GM12878 (cell line): ENCODE measurements at regions of chr3 and their contacts with region 1.

Region 1: GRCh38 chr3:56801662-56802377 is at the start of gene ARHGEF3:
- DNase-seq: no peak
- ATAC-seq: peak; percentile 91
- H3K4me3 ChIP-seq: peak within 1 kb of the TSS; percentile 71
- H3K27ac ChIP-seq: peak within 1 kb of the TSS; percentile 54
- H3K4me1 ChIP-seq: peaks cover 6% of the 10 kb centered on the region
- H3K27me3 ChIP-seq: no peaks in the 10 kb centered on the region
- CTCF ChIP-seq: peak; percentile 70 to 81 (median 75)
- EP300 ChIP-seq: no peak
- POLR2A ChIP-seq: peak; percentile 77
- RAD21 ChIP-seq: peak; percentile 67
- polyA plus RNA-seq, gene ARHGEF3: 21.8 to 31.1 TPM

Region 2: GRCh38 chr3:56291953-56292352 is 509.9 kb before region 1 on chr3:
- CTCF ChIA-PET with region 1: no interaction called
- POLR2A ChIA-PET with region 1: no interaction called
- RAD21 ChIA-PET with region 1: no interaction called
- SMC1A ChIA-PET with region 1: no interaction called
- in situ Hi-C with region 1: no loop called
- intact Hi-C with region 1: no loop called
- DNase-seq: no peak
- ATAC-seq: no peak; the same call in 2 of the 3 replicates
- H3K4me3 ChIP-seq: no peak overlapping the region
- H3K27ac ChIP-seq: no peak overlapping the region
- H3K4me1 ChIP-seq: peaks cover 13% of the 10 kb centered on the region
- H3K27me3 ChIP-seq: no peaks in the 10 kb centered on the region
- CTCF ChIP-seq: no peak
- EP300 ChIP-seq: no peak
- POLR2A ChIP-seq: no peak
- RAD21 ChIP-seq: no peak

Region 3: GRCh38 chr3:56556908-56557830 is 244.7 kb before region 1 on chr3 and contains the start of gene CCDC66:
- CTCF ChIA-PET with region 1: interaction called, 6 read pairs
- POLR2A ChIA-PET with region 1: no interaction called
- RAD21 ChIA-PET with region 1: interaction called, 4 read pairs
- SMC1A ChIA-PET with region 1: interaction called, 18 read pairs
- in situ Hi-C with region 1: no loop called
- intact Hi-C with region 1: no loop called
- DNase-seq: peak; percentile 82
- ATAC-seq: peak; percentile 99
- H3K4me3 ChIP-seq: peak within 1 kb of the TSS; percentile 80
- H3K27ac ChIP-seq: peak within 1 kb of the TSS; percentile 73
- H3K4me1 ChIP-seq: no peaks in the 10 kb centered on the region
- H3K27me3 ChIP-seq: no peaks in the 10 kb centered on the region
- CTCF ChIP-seq: peak; percentile 74 to 86 (median 84)
- EP300 ChIP-seq: no peak
- POLR2A ChIP-seq: peak; percentile 99
- RAD21 ChIP-seq: peak; percentile 35; the same call in 1 of the 2 replicates
- polyA plus RNA-seq, gene CCDC66: 9.4 to 13.9 TPM

Region 4: DNA sequence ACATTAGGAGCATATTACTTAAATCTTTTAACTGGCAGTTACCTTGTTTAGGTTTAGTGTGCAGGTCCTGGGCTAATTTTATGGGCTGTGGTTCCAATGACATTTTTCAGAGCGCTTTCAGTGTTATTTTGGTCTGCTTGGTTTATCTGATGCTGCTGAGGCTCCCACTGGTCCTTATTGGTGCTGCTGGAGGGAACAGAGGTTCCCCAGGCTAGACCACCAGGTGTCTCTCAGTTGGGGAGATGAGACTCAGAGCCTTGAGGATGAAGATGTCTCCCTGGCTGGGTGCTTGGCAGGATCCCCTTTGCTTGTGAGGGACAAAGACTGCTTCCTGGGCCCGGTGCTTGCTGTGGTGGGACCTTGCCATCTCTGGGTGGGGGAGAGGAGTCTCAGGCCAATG is 90.5 kb before region 1 on chr3:
- CTCF ChIA-PET with region 1: interaction called, 429 read pairs
- POLR2A ChIA-PET with region 1: interaction called, 74 read pairs
- RAD21 ChIA-PET with region 1: interaction called, 388 read pairs
- SMC1A ChIA-PET with region 1: interaction called, 411 read pairs
- in situ Hi-C with region 1: loop called (anchors 5 kb)
- intact Hi-C with region 1: no loop called
- DNase-seq: no peak
- ATAC-seq: peak; percentile 66
- H3K4me3 ChIP-seq: no peak overlapping the region
- H3K27ac ChIP-seq: no peak overlapping the region
- H3K4me1 ChIP-seq: no peaks in the 10 kb centered on the region
- H3K27me3 ChIP-seq: no peaks in the 10 kb centered on the region
- CTCF ChIP-seq: peak in 2 of 3 experiments; percentile 7 to 20; a peak in 2 of 6 replicates
- EP300 ChIP-seq: no peak
- POLR2A ChIP-seq: no peak
- RAD21 ChIP-seq: peak; percentile 18; the same call in 1 of the 2 replicates

Region 5: GRCh38 chr3:56758539-56758981 is 43.3 kb before region 1 on chr3:
- CTCF ChIA-PET with region 1: interaction called, 244 read pairs
- POLR2A ChIA-PET with region 1: interaction called, 86 read pairs
- RAD21 ChIA-PET with region 1: interaction called, 307 read pairs
- SMC1A ChIA-PET with region 1: interaction called, 383 read pairs
- in situ Hi-C with region 1: no loop called
- intact Hi-C with region 1: loop called (anchors 2 kb)
- DNase-seq: peak; percentile 87
- ATAC-seq: peak; percentile 88
- H3K4me3 ChIP-seq: peak overlapping the region; percentile 49; the same call in 1 of the 2 replicates
- H3K27ac ChIP-seq: peak overlapping the region; percentile 62
- H3K4me1 ChIP-seq: peaks cover 42% of the 10 kb centered on the region
- H3K27me3 ChIP-seq: no peaks in the 10 kb centered on the region
- CTCF ChIP-seq: no peak
- EP300 ChIP-seq: peak; percentile 77 to 78
- POLR2A ChIP-seq: no peak
- RAD21 ChIP-seq: peak; percentile 11

Region 6: DNA sequence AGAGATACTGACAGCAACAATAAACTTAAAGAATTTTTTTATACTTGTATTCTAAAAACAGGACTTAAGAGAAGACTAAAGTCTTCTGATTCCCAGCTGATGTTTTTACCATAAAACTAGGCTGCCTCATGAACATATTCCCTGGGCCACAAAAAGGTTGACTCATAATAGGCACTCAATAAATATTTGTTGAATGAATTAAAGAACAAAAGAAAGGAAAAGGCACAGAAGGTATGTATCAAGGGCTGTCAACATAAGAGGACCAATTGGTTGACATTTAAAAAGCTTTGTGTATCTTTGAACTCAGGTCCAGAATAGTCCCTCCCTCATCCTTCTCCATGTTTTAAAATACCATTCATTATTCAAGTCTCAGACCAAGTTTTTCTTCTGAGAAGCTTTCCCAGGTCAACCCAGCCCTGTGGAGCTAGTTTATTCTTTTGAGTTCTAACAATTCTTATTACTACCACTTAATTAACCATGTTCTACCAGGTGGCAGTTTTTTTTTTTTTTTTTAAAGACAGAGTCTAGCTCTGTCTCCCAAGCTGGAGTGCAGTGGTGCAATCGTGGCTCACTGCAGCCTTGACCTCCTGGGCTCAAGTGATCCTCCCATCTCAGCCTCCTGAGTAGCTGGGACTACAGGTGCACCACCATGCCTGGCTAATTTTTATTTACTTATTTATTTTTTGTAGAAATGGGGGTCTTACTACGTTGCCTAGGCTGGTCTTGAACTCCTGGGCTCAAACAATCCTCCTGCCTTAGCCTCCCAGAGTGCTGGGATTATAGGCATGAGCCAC is 17.4 kb after region 1 on chr3:
- CTCF ChIA-PET with region 1: interaction called, 41 read pairs
- POLR2A ChIA-PET with region 1: interaction called, 5 read pairs
- RAD21 ChIA-PET with region 1: interaction called, 27 read pairs
- SMC1A ChIA-PET with region 1: interaction called, 40 read pairs
- in situ Hi-C with region 1: no loop called
- intact Hi-C with region 1: no loop called
- DNase-seq: no peak
- ATAC-seq: no peak
- H3K4me3 ChIP-seq: no peak overlapping the region
- H3K27ac ChIP-seq: no peak overlapping the region
- H3K4me1 ChIP-seq: no peaks in the 10 kb centered on the region; the same call in 1 of the 2 replicates
- H3K27me3 ChIP-seq: peaks cover 0 to 2% of the 10 kb centered on the region in 2 experiments; a peak in 1 of 4 replicates
- CTCF ChIP-seq: no peak
- EP300 ChIP-seq: no peak
- POLR2A ChIP-seq: no peak
- RAD21 ChIP-seq: no peak

Region 7: GRCh38 chr3:56921573-56922453 is 120.0 kb after region 1 on chr3:
- CTCF ChIA-PET with region 1: interaction called, 40 read pairs
- POLR2A ChIA-PET with region 1: interaction called, 6 read pairs
- RAD21 ChIA-PET with region 1: interaction called, 39 read pairs
- SMC1A ChIA-PET with region 1: interaction called, 39 read pairs
- in situ Hi-C with region 1: no loop called
- intact Hi-C with region 1: loop called (anchors 1 kb)
- DNase-seq: no peak
- ATAC-seq: no peak
- H3K4me3 ChIP-seq: no peak overlapping the region; the same call in 1 of the 2 replicates
- H3K27ac ChIP-seq: no peak overlapping the region
- H3K4me1 ChIP-seq: peaks cover 44% of the 10 kb centered on the region
- H3K27me3 ChIP-seq: no peaks in the 10 kb centered on the region
- CTCF ChIP-seq: no peak
- EP300 ChIP-seq: no peak
- POLR2A ChIP-seq: no peak
- RAD21 ChIP-seq: no peak

Region 8: GRCh38 chr3:57078344-57078634 is 276.5 kb after region 1 on chr3:
- CTCF ChIA-PET with region 1: interaction called, 3 read pairs
- POLR2A ChIA-PET with region 1: no interaction called
- RAD21 ChIA-PET with region 1: no interaction called
- SMC1A ChIA-PET with region 1: no interaction called
- in situ Hi-C with region 1: no loop called
- intact Hi-C with region 1: loop called (anchors 10 kb)
- DNase-seq: no peak
- ATAC-seq: peak; percentile 65
- H3K4me3 ChIP-seq: peak overlapping the region; percentile 65
- H3K27ac ChIP-seq: no peak overlapping the region
- H3K4me1 ChIP-seq: no peaks in the 10 kb centered on the region
- H3K27me3 ChIP-seq: peaks cover 3 to 16% of the 10 kb centered on the region in 2 experiments
- CTCF ChIP-seq: no peak
- EP300 ChIP-seq: no peak
- POLR2A ChIP-seq: no peak
- RAD21 ChIP-seq: no peak